ENCODE measurements at regions of chr12 and their contacts with region 1.

Region 1: GRCh38 chr12:72017054-72017651 is 78.5 kb downstream of the TPH2 start:
- ATAC-seq: peak; percentile 80 to 95 (median 90)
- H3K4me3 ChIP-seq: no peak overlapping the region
- H3K27ac ChIP-seq: no peak overlapping the region
- H3K4me1 ChIP-seq: peaks cover 0 to 3% of the 10 kb centered on the region in 2 donors

Region 2: GRCh38 chr12:71594214-71594948 is 422.8 kb before region 1 on chr12:
- in situ Hi-C with region 1: no loop called
- ATAC-seq: peak in 3 of 8 experiments; percentile 63 to 77 (median 65)
- H3K4me3 ChIP-seq: no peak overlapping the region
- H3K27ac ChIP-seq: no peak overlapping the region
- H3K4me1 ChIP-seq: no peaks in the 10 kb centered on the region

Region 3: GRCh38 chr12:72271451-72272090 is 254.4 kb after region 1 on chr12:
- in situ Hi-C with region 1: loop called in 1 of 9 experiments (anchors 25 kb)
- ATAC-seq: peak; percentile 45 to 81 (median 76)
- H3K4me3 ChIP-seq: peak overlapping the region; percentile 51 to 87 (median 73)
- H3K27ac ChIP-seq: peak overlapping the region; percentile 27 to 42
- H3K4me1 ChIP-seq: peaks cover 3 to 6% of the 10 kb centered on the region in 2 donors

Measured in motor neuron (in vitro differentiated cells).